ENCODE measurements at regions of chr19 and their contacts with region 1.

Region 1: DNA sequence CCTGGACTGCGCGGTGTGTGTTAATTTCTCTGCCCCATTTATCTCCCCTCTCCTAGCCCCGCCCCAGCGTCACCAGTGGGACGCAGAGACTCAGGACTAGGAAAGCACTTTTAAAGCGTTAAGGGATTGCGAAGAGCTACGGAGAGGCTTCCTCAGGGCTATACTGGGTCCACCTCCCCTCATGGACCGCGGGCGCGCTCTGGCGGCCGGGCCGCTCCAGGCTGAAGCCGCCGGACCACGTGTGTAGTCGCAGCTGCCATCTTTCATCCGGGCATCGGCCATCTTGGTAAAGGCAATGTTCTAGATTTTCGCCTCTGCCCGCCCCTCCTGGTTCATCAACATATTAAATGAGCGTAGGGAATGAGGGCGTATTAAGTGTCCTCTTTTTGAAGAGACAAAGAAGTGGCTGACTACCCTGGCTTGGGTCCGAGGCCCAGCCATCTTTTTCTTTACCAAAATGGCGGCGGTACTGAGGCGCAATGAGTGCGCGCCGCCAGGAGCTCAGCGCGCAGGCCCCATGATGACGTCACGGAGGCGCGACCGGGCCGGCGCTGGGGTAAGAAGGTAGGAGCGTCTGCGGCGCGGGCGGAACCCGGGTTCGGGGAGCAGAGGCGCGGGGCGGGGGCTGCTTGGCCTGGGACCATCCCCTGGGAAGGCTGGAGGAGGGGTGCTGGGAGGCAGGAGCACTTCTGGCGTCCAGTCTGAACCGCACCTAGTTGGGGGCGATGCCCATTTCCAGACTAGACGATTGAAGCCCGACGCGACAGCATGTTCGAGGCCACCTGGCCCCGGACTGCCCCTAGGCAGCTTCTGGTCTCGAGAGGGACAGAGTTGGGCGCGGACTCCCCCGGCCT is at the start of gene CCDC124:
- DNase-seq: peak; percentile 91
- H3K27ac ChIP-seq: peak within 1 kb of the TSS; percentile 84
- CTCF ChIP-seq: peak; percentile 98

Region 2: GRCh38 chr19:17616961-17617806 is 315.5 kb before region 1 on chr19:
- CTCF ChIA-PET with region 1: no interaction called
- POLR2A ChIA-PET with region 1: no interaction called
- DNase-seq: peak; percentile 40
- H3K27ac ChIP-seq: no peak overlapping the region
- CTCF ChIP-seq: no peak

Region 3: GRCh38 chr19:17859533-17860330 is 73.0 kb before region 1 on chr19 and contains the start of gene RPL18A:
- CTCF ChIA-PET with region 1: interaction called, 52 read pairs
- POLR2A ChIA-PET with region 1: interaction called, 21 read pairs
- DNase-seq: peak; percentile 97
- H3K27ac ChIP-seq: peak within 1 kb of the TSS; percentile 77
- CTCF ChIP-seq: peak; percentile 98

Region 4: DNA sequence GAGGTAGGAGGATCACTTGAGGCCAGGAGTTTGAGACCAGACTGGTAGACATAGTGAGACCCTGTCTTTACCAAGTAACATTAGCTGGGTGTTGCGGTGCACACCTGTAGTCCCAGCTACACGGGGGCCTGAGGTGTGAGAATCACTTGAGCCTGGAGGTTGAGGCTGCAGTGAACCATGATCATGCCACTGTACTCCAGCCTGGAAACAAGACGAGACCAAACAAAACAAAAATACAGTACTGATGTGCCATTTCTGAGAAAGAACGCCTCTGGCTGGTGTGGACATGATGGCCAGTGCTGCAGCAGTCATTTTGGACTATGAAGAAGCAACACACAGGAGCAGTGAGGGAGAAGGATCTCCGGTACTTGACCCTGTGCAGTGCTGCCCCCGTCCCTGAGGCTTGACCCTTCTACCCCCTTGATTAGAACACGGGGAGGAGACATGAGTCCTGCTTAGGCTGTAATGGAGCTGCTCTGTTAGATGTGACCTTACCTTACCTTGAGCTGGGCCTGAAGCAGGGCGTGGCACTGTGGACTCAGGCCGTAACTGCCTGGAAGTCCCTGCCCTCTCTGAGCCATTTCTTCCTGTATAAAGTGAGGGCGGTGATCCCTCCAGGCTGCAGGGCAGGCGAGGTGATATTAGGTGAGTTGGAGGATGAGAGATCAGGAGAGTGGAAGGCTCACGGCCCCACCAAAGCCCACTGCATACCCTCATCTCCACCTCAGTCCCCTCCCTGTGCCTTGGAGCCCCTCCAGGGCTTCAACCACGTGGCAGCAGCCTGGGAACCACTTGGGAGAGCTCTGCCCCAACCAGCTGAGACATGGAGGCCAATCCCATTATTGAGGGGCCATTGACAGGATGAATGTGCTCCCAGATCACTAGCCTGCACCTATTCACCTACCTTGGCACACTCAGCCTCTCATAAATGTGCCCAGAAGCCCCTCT is 67.1 kb before region 1 on chr19:
- CTCF ChIA-PET with region 1: interaction called, 87 read pairs
- POLR2A ChIA-PET with region 1: interaction called, 11 read pairs
- DNase-seq: peak; percentile 52
- H3K27ac ChIP-seq: peak overlapping the region; percentile 77
- CTCF ChIP-seq: no peak

Region 5: GRCh38 chr19:17871878-17872250 is 60.8 kb before region 1 on chr19 and contains the start of gene SLC5A5:
- CTCF ChIA-PET with region 1: interaction called, 87 read pairs
- POLR2A ChIA-PET with region 1: interaction called, 11 read pairs
- DNase-seq: no peak
- H3K27ac ChIP-seq: no peak within 1 kb of the TSS
- CTCF ChIP-seq: no peak

Region 6: GRCh38 chr19:17915951-17916593 is 16.6 kb before region 1 on chr19:
- CTCF ChIA-PET with region 1: interaction called, 6 read pairs
- POLR2A ChIA-PET with region 1: interaction called, 11 read pairs
- DNase-seq: peak; percentile 47
- H3K27ac ChIP-seq: no peak overlapping the region
- CTCF ChIP-seq: no peak

Region 7: DNA sequence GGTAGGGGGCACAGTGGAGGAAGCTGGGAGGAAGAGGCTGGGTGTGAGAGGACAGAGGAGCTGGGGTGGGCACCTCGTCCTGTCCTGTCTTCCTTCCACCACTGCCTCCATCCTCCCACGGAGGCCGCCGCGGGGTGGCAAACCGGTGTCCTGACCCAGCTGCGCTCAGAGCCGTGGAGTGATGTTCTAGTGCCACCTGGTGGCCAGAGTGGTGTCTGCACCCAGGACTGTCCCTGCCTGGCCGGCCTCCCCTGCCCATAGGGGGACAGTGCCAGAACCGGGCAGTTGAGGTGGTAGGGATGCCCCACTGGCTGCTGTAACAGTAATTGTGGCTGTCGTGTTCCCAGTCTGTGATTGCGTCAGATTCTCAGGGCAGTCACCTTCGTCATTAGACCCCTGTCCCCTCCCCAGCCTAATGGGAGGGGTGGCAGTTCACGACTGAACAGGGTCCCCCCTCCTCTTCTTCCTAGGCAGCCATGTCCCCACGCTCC is 64.2 kb after region 1 on chr19:
- CTCF ChIA-PET with region 1: interaction called, 71 read pairs
- POLR2A ChIA-PET with region 1: no interaction called
- DNase-seq: peak; percentile 82
- H3K27ac ChIP-seq: peak overlapping the region; percentile 9; the same call in 1 of the 2 replicates
- CTCF ChIP-seq: peak; percentile 98

Region 8: GRCh38 chr19:18291590-18292461 is 359.1 kb after region 1 on chr19:
- CTCF ChIA-PET with region 1: no interaction called
- POLR2A ChIA-PET with region 1: no interaction called
- DNase-seq: peak; percentile 54
- H3K27ac ChIP-seq: peak overlapping the region; percentile 91
- CTCF ChIP-seq: no peak